ENCODE measurements at regions of chr1 and their contacts with region 1.

Region 1: GRCh38 chr1:28914228-28915030 is at the start of gene EPB41:
- DNase-seq: peak; percentile 79 to 97 (median 93)
- ATAC-seq: peak; percentile 76
- H3K4me3 ChIP-seq: peak within 1 kb of the TSS; percentile 70
- H3K4me3 Mint-ChIP-seq: peak within 1 kb of the TSS; percentile 90
- H3K27ac ChIP-seq: peak within 1 kb of the TSS; percentile 73 to 76
- H3K27ac Mint-ChIP-seq: peak within 1 kb of the TSS; percentile 93
- H3K4me1 ChIP-seq: peaks cover 39% of the 10 kb centered on the region
- H3K4me1 Mint-ChIP-seq: peaks cover 53% of the 10 kb centered on the region
- H3K27me3 ChIP-seq: no peaks in the 10 kb centered on the region
- H3K27me3 Mint-ChIP-seq: no peaks in the 10 kb centered on the region
- CTCF ChIP-seq: no peak
- total RNA-seq, gene EPB41: 138 to 145 TPM

Region 2: DNA sequence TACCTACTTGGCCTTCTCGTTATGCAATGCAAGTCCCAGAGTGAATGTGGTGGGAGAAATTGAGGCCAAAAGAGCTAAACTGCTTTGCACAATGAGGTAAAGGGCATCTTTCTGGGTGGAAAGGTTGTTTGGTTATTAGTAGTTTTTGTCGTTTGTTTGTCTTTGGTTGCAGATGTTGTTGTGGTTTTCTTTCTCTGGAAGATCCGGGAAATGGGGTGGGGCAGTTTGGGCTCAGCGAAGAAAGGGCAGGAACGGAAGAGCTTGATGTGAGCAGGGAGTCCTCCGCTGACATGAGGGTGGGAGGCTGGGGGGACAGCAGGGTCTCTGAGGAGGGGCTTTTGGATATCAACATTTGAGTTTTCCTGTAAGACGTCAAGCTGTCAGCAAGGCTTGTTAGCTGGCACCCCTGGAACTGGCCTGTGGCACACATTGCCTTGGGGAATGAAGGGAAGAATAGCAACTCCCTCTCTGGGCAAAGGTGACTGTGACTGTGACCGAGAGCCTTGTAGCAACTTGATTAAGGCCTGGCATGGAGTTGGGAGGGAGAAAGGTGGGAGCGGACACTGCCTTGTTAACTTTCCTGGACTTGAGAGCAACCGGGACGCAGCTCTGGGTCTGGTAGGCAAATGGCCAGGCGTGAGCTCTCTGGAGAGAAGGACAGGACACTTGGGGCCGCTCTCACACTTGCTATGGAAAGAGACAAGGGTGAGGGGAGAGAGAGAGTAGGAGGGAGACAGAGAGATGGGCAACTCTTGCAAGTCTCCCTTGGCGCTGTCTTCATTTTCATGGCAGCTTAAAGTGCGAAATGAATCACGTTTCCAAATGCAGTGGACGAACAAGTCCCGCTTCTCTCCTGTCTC is 117.8 kb before region 1 on chr1:
- CTCF ChIA-PET with region 1: no interaction called
- POLR2A ChIA-PET with region 1: no interaction called
- intact Hi-C with region 1: no loop called
- DNase-seq: no peak
- ATAC-seq: no peak
- H3K4me3 ChIP-seq: no peak overlapping the region
- H3K4me3 Mint-ChIP-seq: no peak overlapping the region
- H3K27ac ChIP-seq: no peak overlapping the region
- H3K27ac Mint-ChIP-seq: no peak overlapping the region
- H3K4me1 ChIP-seq: no peaks in the 10 kb centered on the region
- H3K4me1 Mint-ChIP-seq: peaks cover 14% of the 10 kb centered on the region
- H3K27me3 ChIP-seq: no peaks in the 10 kb centered on the region
- H3K27me3 Mint-ChIP-seq: peaks cover 11% of the 10 kb centered on the region
- CTCF ChIP-seq: no peak

Region 3: GRCh38 chr1:28893403-28894102 is 20.9 kb before region 1 on chr1:
- CTCF ChIA-PET with region 1: interaction called, 4 read pairs
- POLR2A ChIA-PET with region 1: interaction called, 10 read pairs
- intact Hi-C with region 1: loop called in 1 of 2 experiments (anchors 1 kb)
- DNase-seq: peak in 8 of 14 experiments; percentile 16 to 57 (median 28)
- ATAC-seq: peak; percentile 72
- H3K4me3 ChIP-seq: no peak overlapping the region
- H3K4me3 Mint-ChIP-seq: no peak overlapping the region
- H3K27ac ChIP-seq: no peak overlapping the region
- H3K27ac Mint-ChIP-seq: no peak overlapping the region
- H3K4me1 ChIP-seq: peaks cover 33% of the 10 kb centered on the region
- H3K4me1 Mint-ChIP-seq: peaks cover 39% of the 10 kb centered on the region
- H3K27me3 ChIP-seq: no peaks in the 10 kb centered on the region
- H3K27me3 Mint-ChIP-seq: no peaks in the 10 kb centered on the region
- CTCF ChIP-seq: peak; percentile 23

Region 4: DNA sequence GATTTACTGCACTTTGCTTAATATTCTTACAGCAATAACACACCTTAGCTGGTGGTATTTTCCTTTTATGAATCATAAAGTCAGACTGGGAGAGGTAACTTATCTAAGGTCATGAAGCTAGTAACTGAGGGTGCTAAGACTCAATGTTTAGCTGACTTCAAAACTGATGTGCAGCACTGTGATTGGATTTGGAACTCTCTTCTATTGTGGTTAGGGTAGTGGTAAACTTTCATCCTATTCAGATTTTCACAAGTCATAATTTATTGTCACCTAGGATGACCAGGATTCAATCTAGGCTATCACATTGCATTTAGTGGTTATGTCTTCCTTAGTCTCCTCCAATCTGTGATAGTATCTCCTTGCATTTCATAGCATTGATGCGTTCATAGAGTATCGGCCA is 18.8 kb after region 1 on chr1:
- CTCF ChIA-PET with region 1: no interaction called
- POLR2A ChIA-PET with region 1: interaction called, 110 read pairs
- intact Hi-C with region 1: loop called in 1 of 2 experiments (anchors 2 kb)
- DNase-seq: peak in 4 of 14 experiments; percentile 21 to 52 (median 40)
- ATAC-seq: peak; percentile 84
- H3K4me3 ChIP-seq: no peak overlapping the region
- H3K4me3 Mint-ChIP-seq: peak overlapping the region; percentile 55
- H3K27ac ChIP-seq: peak overlapping the region in 1 of 2 donors; percentile 4
- H3K27ac Mint-ChIP-seq: peak overlapping the region; percentile 78
- H3K4me1 ChIP-seq: peaks cover 49% of the 10 kb centered on the region
- H3K4me1 Mint-ChIP-seq: peaks cover 75% of the 10 kb centered on the region
- H3K27me3 ChIP-seq: no peaks in the 10 kb centered on the region
- H3K27me3 Mint-ChIP-seq: no peaks in the 10 kb centered on the region
- CTCF ChIP-seq: no peak

Region 5: GRCh38 chr1:28965271-28965870 is 50.9 kb after region 1 on chr1:
- CTCF ChIA-PET with region 1: interaction called, 3 read pairs
- POLR2A ChIA-PET with region 1: interaction called, 4 read pairs
- intact Hi-C with region 1: loop called (anchors 5 kb)
- DNase-seq: peak in 2 of 14 experiments; percentile 14 to 20
- ATAC-seq: peak; percentile 94
- H3K4me3 ChIP-seq: no peak overlapping the region
- H3K4me3 Mint-ChIP-seq: peak overlapping the region; percentile 14
- H3K27ac ChIP-seq: peak overlapping the region in 1 of 2 donors; percentile 22
- H3K27ac Mint-ChIP-seq: peak overlapping the region; percentile 83
- H3K4me1 ChIP-seq: peaks cover 20% of the 10 kb centered on the region
- H3K4me1 Mint-ChIP-seq: peaks cover 62% of the 10 kb centered on the region
- H3K27me3 ChIP-seq: no peaks in the 10 kb centered on the region
- H3K27me3 Mint-ChIP-seq: no peaks in the 10 kb centered on the region
- CTCF ChIP-seq: no peak